Right ventricle myocardium inferior (tissue), 1 donor: ENCODE measurements at regions of chr7 and their contacts with region 1.

Region 1: DNA sequence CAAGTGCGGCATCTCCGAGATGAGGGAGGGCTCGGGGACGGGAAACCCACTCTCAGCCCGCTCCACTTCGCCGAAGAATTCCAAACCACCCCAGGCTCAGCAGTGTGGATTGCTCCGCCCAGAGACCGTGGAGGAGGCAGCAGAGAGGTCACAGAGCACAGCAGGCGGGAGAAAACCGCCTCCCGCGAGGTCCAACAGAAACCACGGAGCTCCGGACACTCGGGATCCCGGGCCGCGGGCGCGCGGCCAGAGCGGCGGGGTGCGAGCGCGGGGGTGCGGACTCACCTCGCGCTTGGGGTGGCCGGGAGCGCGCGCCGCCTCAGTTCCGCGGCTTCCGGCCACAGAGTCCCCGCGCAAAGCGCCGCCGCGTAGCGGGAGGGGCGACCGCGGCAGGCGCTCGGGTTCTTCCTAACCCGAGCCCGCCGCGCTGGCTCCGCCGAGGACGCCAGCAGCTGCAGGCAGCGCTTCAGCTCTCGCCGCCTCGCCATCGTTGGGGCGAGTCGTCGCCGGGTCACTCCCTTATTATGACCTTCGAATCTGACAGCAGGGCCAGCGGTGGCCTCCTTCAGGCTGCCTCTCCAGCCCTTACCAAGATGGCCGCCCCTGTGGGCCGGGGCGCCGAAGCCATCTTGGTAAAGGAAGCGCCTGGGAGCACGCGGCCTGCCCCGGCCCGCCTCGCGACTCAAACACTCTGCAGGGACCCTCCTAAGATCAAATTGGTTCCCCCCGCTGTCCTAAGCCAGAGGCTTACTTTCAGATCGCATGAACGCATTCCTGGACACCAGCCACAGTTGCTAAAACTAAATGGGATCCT is at the start of gene NAPEPLD:
- DNase-seq: peak; percentile 94
- ATAC-seq: peak; percentile 97
- total RNA-seq, gene NAPEPLD: 13.1 TPM

Region 2: GRCh38 chr7:103037476-103037822 is 111.8 kb before region 1 on chr7:
- intact Hi-C with region 1: no loop called
- DNase-seq: no peak
- ATAC-seq: no peak

Region 3: DNA sequence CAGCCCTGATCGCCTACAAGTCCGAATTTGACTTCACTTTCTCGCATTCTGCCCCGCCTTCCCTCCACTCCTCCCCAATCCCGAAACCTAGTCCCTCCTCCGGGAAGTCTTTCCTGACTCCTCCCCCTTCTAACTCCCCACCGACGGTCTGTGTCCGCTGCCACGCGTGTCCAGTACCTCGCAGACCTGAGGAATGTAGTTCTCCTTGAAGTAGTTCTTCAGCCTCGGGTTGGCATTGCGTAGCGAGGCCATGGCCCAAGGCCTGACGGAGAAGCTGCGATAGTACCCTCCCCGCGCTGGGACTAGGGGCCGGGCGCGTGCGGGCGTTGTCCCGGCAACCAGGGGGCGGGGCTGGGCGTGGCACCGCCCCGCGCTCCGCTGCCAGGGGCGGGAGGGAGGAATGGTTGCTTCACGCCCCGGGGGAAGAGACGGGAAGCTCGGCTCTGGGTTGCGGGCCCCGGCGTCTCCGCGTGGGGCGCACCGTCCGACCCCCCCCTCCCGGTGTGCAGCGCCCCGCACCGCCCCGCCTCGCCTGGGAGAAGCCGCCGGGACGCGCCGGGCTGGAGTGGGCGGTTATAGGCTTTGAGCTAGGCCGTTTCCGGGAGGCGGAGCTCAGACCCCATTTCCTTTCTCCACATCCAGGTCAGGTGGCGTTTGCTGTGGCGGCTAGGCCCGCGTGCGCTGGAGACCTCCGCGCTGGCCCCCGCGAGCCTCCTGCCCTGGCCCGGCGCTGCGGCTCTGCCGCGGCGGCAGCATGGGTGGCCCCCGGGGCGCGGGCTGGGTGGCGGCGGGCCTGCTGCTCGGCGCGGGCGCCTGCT is 74.5 kb before region 1 on chr7 and contains the starts of genes ARMC10 and FBXL13:
- intact Hi-C with region 1: loop called (anchors 2 kb)
- DNase-seq: peak; percentile 93
- ATAC-seq: peak; percentile 97
- total RNA-seq, gene ARMC10: 20.7 TPM
- total RNA-seq, gene FBXL13: 0.24 TPM